ENCODE measurements at regions of chr19 and their contacts with region 1.

Region 1: DNA sequence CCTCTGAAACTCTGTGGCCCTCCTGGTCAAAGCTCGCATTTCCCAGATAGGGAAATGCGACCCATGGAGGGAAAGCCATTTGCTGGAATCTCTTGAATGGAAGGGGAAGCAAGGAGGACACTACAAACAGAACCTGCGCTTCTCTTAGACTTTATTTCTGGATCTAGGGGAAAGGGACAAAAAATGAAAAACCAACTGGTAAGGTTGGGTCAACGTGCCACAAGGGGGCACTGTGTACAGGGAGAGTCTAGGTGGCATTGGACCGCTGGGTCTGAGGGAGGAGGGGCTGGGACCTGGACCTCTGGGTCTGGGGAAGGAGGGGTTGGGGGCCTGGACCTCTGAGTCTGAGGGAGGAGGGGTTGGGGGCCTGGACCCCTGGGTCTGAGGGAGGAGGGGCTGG is 5.0 kb downstream of the KLK4 start:
- DNase-seq: peak; percentile 33
- H3K4me3 ChIP-seq: no peak overlapping the region
- H3K27ac ChIP-seq: no peak overlapping the region
- H3K4me1 ChIP-seq: no peaks in the 10 kb centered on the region
- CTCF ChIP-seq: peak; percentile 74

Region 2: GRCh38 chr19:50882183-50882582 is 24.0 kb before region 1 on chr19:
- CTCF ChIA-PET with region 1: no interaction called
- POLR2A ChIA-PET with region 1: no interaction called
- intact Hi-C with region 1: no loop called
- DNase-seq: no peak
- H3K4me3 ChIP-seq: no peak overlapping the region
- H3K27ac ChIP-seq: no peak overlapping the region
- H3K4me1 ChIP-seq: no peaks in the 10 kb centered on the region
- CTCF ChIP-seq: peak; percentile 58

Region 3: DNA sequence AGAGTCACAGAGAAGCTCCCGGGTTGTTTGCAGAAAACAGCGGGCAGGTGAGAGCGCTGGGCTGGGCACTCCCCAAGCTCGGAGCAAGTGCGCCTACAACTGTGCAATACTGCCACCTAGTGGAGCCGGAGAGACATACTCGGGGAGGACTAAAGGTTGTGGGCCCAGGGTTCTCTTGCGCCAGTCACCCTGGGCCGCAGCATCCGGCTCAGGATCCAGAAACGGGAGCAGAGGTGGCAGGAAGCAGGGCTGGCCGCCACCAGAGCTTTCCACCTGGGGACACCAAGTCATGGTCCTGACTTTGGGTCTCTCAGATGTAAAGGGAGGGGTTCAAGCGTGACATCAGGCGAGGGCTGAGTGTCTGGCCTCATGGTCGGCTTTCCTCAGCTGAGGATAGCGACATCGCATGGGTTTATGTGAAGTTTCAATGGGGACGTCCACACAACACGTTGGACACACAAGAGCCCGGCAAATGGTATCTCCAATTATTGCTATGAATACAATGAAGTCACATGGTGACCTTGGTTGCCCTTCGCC is 16.2 kb after region 1 on chr19:
- CTCF ChIA-PET with region 1: interaction called, 8 read pairs
- POLR2A ChIA-PET with region 1: no interaction called
- intact Hi-C with region 1: loop called (anchors 1 kb)
- DNase-seq: peak; percentile 85
- H3K4me3 ChIP-seq: no peak overlapping the region
- H3K27ac ChIP-seq: no peak overlapping the region
- H3K4me1 ChIP-seq: no peaks in the 10 kb centered on the region
- CTCF ChIP-seq: peak; percentile 95

Region 4: GRCh38 chr19:50969411-50969756 is 63.2 kb after region 1 on chr19 and contains the start of gene KLK6:
- CTCF ChIA-PET with region 1: no interaction called
- POLR2A ChIA-PET with region 1: no interaction called
- intact Hi-C with region 1: no loop called
- DNase-seq: no peak
- H3K4me3 ChIP-seq: no peak within 1 kb of the TSS
- H3K27ac ChIP-seq: no peak within 1 kb of the TSS
- H3K4me1 ChIP-seq: no peaks in the 10 kb centered on the region
- CTCF ChIP-seq: no peak
- total RNA-seq, gene KLK6: not detected in 2 replicates

Region 5: DNA sequence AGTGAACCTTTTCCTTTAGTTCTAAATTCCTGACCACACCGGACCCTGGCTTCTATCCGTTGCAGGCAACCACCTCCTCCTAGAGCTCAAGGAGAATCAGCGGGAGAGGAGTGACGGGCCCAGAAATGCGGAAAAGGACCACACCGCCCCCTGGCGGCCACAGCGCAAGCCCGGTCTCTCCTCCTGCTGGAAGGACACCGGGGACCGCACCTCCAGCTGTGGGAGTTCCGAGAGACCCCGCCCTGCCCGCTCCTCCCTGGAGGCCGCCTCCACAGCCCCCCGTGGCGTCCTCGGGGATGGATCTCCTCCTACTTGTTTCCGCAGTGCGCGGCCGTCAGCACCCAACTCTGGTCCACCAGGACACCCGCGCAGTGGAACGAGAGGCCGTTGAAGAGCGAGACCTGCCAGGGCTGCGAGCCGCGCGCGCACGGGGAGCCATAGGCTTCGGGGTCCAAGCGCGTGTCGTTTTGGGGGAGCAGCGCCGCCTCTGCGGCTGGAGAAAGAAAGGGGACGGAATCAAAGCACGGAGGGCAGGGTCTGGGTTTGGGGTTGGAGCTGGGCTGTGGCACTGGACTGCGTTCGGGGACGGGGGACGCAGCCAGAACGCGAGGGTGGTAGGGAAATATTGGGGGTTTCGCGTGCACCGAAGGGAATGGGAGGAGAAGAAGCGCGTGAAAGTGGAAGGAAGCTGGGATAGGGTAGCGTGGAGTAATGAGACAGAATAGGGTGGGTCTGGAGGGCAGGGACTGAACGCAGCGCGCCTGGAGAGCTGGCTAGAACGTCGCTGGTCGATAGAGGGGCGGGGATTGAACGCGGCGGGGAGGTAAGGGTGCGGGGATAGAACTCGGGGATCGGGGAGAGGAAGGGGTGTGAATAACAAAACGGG is 110.8 kb after region 1 on chr19:
- CTCF ChIA-PET with region 1: no interaction called
- POLR2A ChIA-PET with region 1: no interaction called
- intact Hi-C with region 1: no loop called
- DNase-seq: peak; percentile 20
- H3K4me3 ChIP-seq: no peak overlapping the region
- H3K27ac ChIP-seq: no peak overlapping the region
- H3K4me1 ChIP-seq: no peaks in the 10 kb centered on the region
- CTCF ChIP-seq: peak; percentile 74